Naive thymus-derived CD4-positive, alpha-beta T cell (primary cell): ENCODE measurements at regions of chr2 and their contacts with region 1.

Region 1: GRCh38 chr2:200864176-200864976 is at the start of gene CLK1:
- DNase-seq: peak; percentile 87 to 97 (median 94)
- ATAC-seq: peak; percentile 89
- H3K4me3 ChIP-seq: peak within 1 kb of the TSS; percentile 100
- H3K4me3 Mint-ChIP-seq: peak within 1 kb of the TSS; percentile 89 to 98 (median 94)
- H3K27ac ChIP-seq: peak within 1 kb of the TSS; percentile 98
- H3K27ac Mint-ChIP-seq: peak within 1 kb of the TSS; percentile 99 to 100 (median 100)
- H3K4me1 ChIP-seq: peaks cover 23 to 26% of the 10 kb centered on the region in 2 donors
- H3K4me1 Mint-ChIP-seq: peaks cover 28 to 58% (median 48%) of the 10 kb centered on the region in 7 donors
- H3K27me3 ChIP-seq: no peaks in the 10 kb centered on the region
- H3K27me3 Mint-ChIP-seq: peaks cover 0 to 2% (median 0%) of the 10 kb centered on the region in 5 donors
- total RNA-seq, gene CLK1: 134 to 974 (median 502) TPM

Region 2: GRCh38 chr2:199979832-199980628 is 884.3 kb before region 1 on chr2:
- CTCF ChIA-PET with region 1: no interaction called
- POLR2A ChIA-PET with region 1: no interaction called
- intact Hi-C with region 1: loop called in 1 of 2 experiments (anchors 5 kb)
- DNase-seq: peak; percentile 42 to 79 (median 71)
- ATAC-seq: peak; percentile 85
- H3K4me3 ChIP-seq: no peak overlapping the region
- H3K4me3 Mint-ChIP-seq: peak overlapping the region in 1 of 10 donors; percentile 39
- H3K27ac ChIP-seq: no peak overlapping the region
- H3K27ac Mint-ChIP-seq: no peak overlapping the region
- H3K4me1 ChIP-seq: no peaks in the 10 kb centered on the region
- H3K4me1 Mint-ChIP-seq: peaks cover 0 to 22% (median 0%) of the 10 kb centered on the region in 7 donors
- H3K27me3 ChIP-seq: no peaks in the 10 kb centered on the region
- H3K27me3 Mint-ChIP-seq: peaks cover 0 to 2% (median 0%) of the 10 kb centered on the region in 5 donors

Region 3: GRCh38 chr2:200811336-200812121 is 52.8 kb before region 1 on chr2 and contains the start of gene BZW1:
- CTCF ChIA-PET with region 1: no interaction called
- POLR2A ChIA-PET with region 1: interaction called, 39 read pairs
- intact Hi-C with region 1: loop called (anchors 1 kb)
- DNase-seq: peak; percentile 92 to 99 (median 98)
- ATAC-seq: peak; percentile 91
- H3K4me3 ChIP-seq: peak within 1 kb of the TSS; percentile 89
- H3K4me3 Mint-ChIP-seq: peak within 1 kb of the TSS; percentile 89 to 99 (median 98)
- H3K27ac ChIP-seq: peak within 1 kb of the TSS; percentile 99
- H3K27ac Mint-ChIP-seq: peak within 1 kb of the TSS; percentile 91 to 99 (median 98)
- H3K4me1 ChIP-seq: peaks cover 19 to 24% of the 10 kb centered on the region in 2 donors
- H3K4me1 Mint-ChIP-seq: peaks cover 30 to 56% (median 48%) of the 10 kb centered on the region in 7 donors
- H3K27me3 ChIP-seq: no peaks in the 10 kb centered on the region
- H3K27me3 Mint-ChIP-seq: peaks cover 0 to 2% (median 0%) of the 10 kb centered on the region in 5 donors
- total RNA-seq, gene BZW1: 127 to 246 (median 207) TPM

Region 4: DNA sequence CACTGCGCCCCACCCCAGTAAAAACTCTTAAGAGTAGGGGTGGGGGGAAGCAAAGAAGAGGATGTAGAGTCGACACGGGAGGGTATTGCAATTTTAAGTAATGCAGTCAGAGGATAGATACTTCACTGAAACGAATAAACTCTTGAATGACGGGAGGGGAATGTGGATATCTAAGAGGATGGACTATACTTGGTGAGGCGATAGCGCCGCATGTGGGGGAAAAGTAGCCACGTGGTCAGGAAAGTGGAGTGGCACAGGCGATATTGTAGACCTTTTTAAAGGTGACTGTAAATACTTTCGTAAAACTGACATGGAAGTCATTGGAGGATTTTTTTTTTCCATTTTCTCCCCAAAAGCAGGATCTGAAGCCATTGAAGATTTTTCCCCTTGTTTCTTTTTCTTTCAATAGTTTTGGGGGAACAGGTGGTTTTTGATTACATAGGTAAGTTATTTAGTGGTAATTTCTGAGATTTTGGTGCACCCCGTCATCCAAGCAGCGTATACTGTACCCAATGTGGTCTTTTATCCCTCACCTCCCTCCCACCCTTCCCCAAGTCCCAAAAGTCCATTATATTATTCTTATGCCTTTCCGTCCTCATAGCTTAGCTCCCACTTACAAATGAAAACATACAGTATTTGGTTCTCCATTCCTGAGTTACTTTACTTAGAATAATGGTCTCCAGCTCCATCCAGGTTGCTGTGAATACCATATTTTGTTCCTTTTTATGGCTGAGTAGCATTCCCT is 13.7 kb before region 1 on chr2:
- CTCF ChIA-PET with region 1: interaction called, 3 read pairs
- POLR2A ChIA-PET with region 1: interaction called, 37 read pairs
- intact Hi-C with region 1: loop called in 1 of 2 experiments (anchors 1 kb)
- DNase-seq: no peak
- ATAC-seq: peak; percentile 12
- H3K4me3 ChIP-seq: no peak overlapping the region
- H3K4me3 Mint-ChIP-seq: peak overlapping the region in 2 of 10 donors; percentile 7 to 38
- H3K27ac ChIP-seq: no peak overlapping the region
- H3K27ac Mint-ChIP-seq: peak overlapping the region in 6 of 9 donors; percentile 34 to 88 (median 64)
- H3K4me1 ChIP-seq: no peaks in the 10 kb centered on the region
- H3K4me1 Mint-ChIP-seq: peaks cover 3 to 24% (median 6%) of the 10 kb centered on the region in 7 donors
- H3K27me3 ChIP-seq: no peaks in the 10 kb centered on the region
- H3K27me3 Mint-ChIP-seq: no peaks in the 10 kb centered on the region

Region 5: GRCh38 chr2:200901459-200902072 is 37.2 kb after region 1 on chr2:
- CTCF ChIA-PET with region 1: interaction called, 3 read pairs
- POLR2A ChIA-PET with region 1: interaction called, 12 read pairs
- intact Hi-C with region 1: no loop called
- DNase-seq: peak; percentile 18 to 83 (median 76)
- ATAC-seq: peak; percentile 100
- H3K4me3 ChIP-seq: no peak overlapping the region
- H3K4me3 Mint-ChIP-seq: no peak overlapping the region
- H3K27ac ChIP-seq: no peak overlapping the region
- H3K27ac Mint-ChIP-seq: peak overlapping the region; percentile 4 to 86 (median 44)
- H3K4me1 ChIP-seq: no peaks in the 10 kb centered on the region
- H3K4me1 Mint-ChIP-seq: peaks cover 0 to 27% (median 6%) of the 10 kb centered on the region in 7 donors
- H3K27me3 ChIP-seq: no peaks in the 10 kb centered on the region
- H3K27me3 Mint-ChIP-seq: no peaks in the 10 kb centered on the region

Region 6: GRCh38 chr2:200913654-200914053 is 49.3 kb after region 1 on chr2:
- CTCF ChIA-PET with region 1: no interaction called
- POLR2A ChIA-PET with region 1: no interaction called
- intact Hi-C with region 1: no loop called
- DNase-seq: no peak
- ATAC-seq: no peak
- H3K4me3 ChIP-seq: no peak overlapping the region
- H3K4me3 Mint-ChIP-seq: no peak overlapping the region
- H3K27ac ChIP-seq: no peak overlapping the region
- H3K27ac Mint-ChIP-seq: peak overlapping the region in 6 of 9 donors; percentile 2 to 54 (median 20)
- H3K4me1 ChIP-seq: no peaks in the 10 kb centered on the region
- H3K4me1 Mint-ChIP-seq: peaks cover 0 to 5% (median 0%) of the 10 kb centered on the region in 7 donors
- H3K27me3 ChIP-seq: no peaks in the 10 kb centered on the region
- H3K27me3 Mint-ChIP-seq: no peaks in the 10 kb centered on the region

Region 7: GRCh38 chr2:201182650-201183364 is 318.4 kb after region 1 on chr2 and contains the start of gene CASP10:
- CTCF ChIA-PET with region 1: interaction called, 3 read pairs
- POLR2A ChIA-PET with region 1: interaction called, 4 read pairs
- intact Hi-C with region 1: loop called in 1 of 2 experiments (anchors 1 kb)
- DNase-seq: peak in 7 of 9 donors; percentile 67 to 83 (median 77)
- ATAC-seq: peak; percentile 90
- H3K4me3 ChIP-seq: peak within 1 kb of the TSS; percentile 68
- H3K4me3 Mint-ChIP-seq: peak within 1 kb of the TSS; percentile 87 to 99 (median 95)
- H3K27ac ChIP-seq: peak within 1 kb of the TSS; percentile 89
- H3K27ac Mint-ChIP-seq: peak within 1 kb of the TSS; percentile 86 to 98 (median 95)
- H3K4me1 ChIP-seq: peaks cover 22 to 24% of the 10 kb centered on the region in 2 donors
- H3K4me1 Mint-ChIP-seq: peaks cover 26 to 46% (median 29%) of the 10 kb centered on the region in 7 donors
- H3K27me3 ChIP-seq: no peaks in the 10 kb centered on the region
- H3K27me3 Mint-ChIP-seq: no peaks in the 10 kb centered on the region
- total RNA-seq, gene CASP10: 29.0 to 49.8 (median 42.9) TPM

Region 8: GRCh38 chr2:201642579-201643215 is 778.3 kb after region 1 on chr2:
- CTCF ChIA-PET with region 1: no interaction called
- POLR2A ChIA-PET with region 1: interaction called, 9 read pairs
- intact Hi-C with region 1: loop called in 1 of 2 experiments (anchors 10 kb)
- DNase-seq: peak; percentile 81 to 94 (median 92)
- ATAC-seq: peak; percentile 94
- H3K4me3 ChIP-seq: peak overlapping the region; percentile 95
- H3K4me3 Mint-ChIP-seq: peak overlapping the region; percentile 86 to 99 (median 96)
- H3K27ac ChIP-seq: peak overlapping the region; percentile 87
- H3K27ac Mint-ChIP-seq: peak overlapping the region; percentile 76 to 100 (median 97)
- H3K4me1 ChIP-seq: peaks cover 3 to 5% of the 10 kb centered on the region in 2 donors
- H3K4me1 Mint-ChIP-seq: peaks cover 5 to 21% (median 12%) of the 10 kb centered on the region in 7 donors
- H3K27me3 ChIP-seq: no peaks in the 10 kb centered on the region
- H3K27me3 Mint-ChIP-seq: peaks cover 0 to 4% (median 0%) of the 10 kb centered on the region in 5 donors